WTC11 (cell line): ENCODE measurements at regions of chr6 and their contacts with region 1.

Region 1: GRCh38 chr6:159463119-159463829 is 229.8 kb downstream of the SOD2 start:
- DNase-seq: no peak
- ATAC-seq: 0 out of 2 replicates have a peak, but pooled peaks have one; percentile 22
- H3K4me3 Mint-ChIP-seq: no peak overlapping the region
- H3K27ac Mint-ChIP-seq: no peak overlapping the region
- H3K4me1 Mint-ChIP-seq: peaks cover 10% of the 10 kb centered on the region
- H3K27me3 Mint-ChIP-seq: no peaks in the 10 kb centered on the region
- CTCF ChIP-seq: peak; percentile 41; the same call in 1 of the 2 replicates

Region 2: GRCh38 chr6:159169193-159169555 is 294.1 kb before region 1 on chr6 and contains the start of gene FNDC1:
- CTCF ChIA-PET with region 1: interaction called, 33 read pairs
- POLR2A ChIA-PET with region 1: no interaction called
- DNase-seq: peak; percentile 63
- ATAC-seq: peak; percentile 47
- H3K4me3 Mint-ChIP-seq: peak within 1 kb of the TSS; percentile 77
- H3K27ac Mint-ChIP-seq: no peak within 1 kb of the TSS
- H3K4me1 Mint-ChIP-seq: peaks cover 15% of the 10 kb centered on the region
- H3K27me3 Mint-ChIP-seq: peaks cover 90% of the 10 kb centered on the region
- CTCF ChIP-seq: peak; percentile 27; the same call in 1 of the 2 replicates
- total RNA-seq, gene FNDC1: 0.23 to 0.44 TPM (median 0.34 TPM) in 3 replicates

Region 3: DNA sequence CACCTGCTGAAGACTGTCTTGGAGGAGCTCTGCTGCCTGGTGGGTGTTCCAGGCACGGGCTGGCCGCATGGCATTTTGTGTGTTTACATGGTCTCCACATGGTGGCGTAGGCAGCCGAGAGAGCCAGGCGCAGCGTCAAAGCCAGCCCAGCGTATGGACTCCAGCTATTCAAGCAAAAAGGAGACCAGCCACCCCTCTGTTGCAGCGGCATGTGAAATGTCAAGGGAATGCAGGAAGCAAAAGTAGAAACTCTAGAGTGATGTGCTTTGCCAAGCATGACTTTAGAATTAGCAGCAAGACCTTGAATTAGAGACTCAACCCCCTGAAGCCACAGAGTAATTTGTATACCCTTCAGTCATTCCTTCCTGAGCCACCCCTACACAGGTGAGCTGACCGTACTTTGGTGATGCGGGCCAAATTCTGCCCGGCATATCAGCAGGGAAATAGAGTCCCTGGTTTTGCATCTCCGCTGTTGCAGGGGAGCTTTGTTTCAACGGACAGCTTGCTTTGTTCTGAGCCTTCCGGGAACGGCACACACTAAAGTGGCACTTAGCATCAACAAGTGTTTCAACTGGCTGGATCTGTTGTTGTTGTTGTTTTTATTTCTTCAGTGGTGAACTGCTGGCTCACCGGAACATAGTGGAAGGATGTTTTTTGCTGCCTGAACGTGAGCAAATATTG is 245.5 kb before region 1 on chr6:
- CTCF ChIA-PET with region 1: interaction called, 31 read pairs
- POLR2A ChIA-PET with region 1: no interaction called
- DNase-seq: peak; percentile 80
- ATAC-seq: peak; percentile 94
- H3K4me3 Mint-ChIP-seq: no peak overlapping the region
- H3K27ac Mint-ChIP-seq: peak overlapping the region; percentile 21; the same call in 1 of the 2 replicates
- H3K4me1 Mint-ChIP-seq: peaks cover 23% of the 10 kb centered on the region
- H3K27me3 Mint-ChIP-seq: no peaks in the 10 kb centered on the region
- CTCF ChIP-seq: 0 out of 2 replicates have a peak, but pooled peaks have one; percentile 14

Region 4: DNA sequence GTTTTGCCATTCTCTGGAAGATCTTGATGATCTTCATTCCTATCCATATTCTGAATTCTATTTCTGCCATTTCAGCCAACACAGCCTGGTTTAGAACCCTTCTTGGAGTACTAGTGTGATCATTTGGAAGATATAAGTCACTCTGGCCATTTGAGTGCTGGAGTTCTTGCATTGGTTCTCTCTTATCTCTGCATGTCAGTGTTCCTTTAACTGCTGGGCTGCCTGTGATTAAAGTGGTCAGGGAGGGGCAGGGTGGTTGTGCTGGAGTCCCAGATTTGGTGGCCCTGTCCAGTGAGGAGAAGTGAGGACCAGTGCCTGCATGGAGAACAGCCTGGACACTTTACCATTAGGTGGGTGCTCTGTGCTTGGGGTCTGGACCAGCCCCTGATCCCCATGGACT is 56.7 kb after region 1 on chr6:
- CTCF ChIA-PET with region 1: no interaction called
- POLR2A ChIA-PET with region 1: no interaction called
- DNase-seq: no peak
- ATAC-seq: no peak
- H3K4me3 Mint-ChIP-seq: no peak overlapping the region
- H3K27ac Mint-ChIP-seq: no peak overlapping the region
- H3K4me1 Mint-ChIP-seq: no peaks in the 10 kb centered on the region
- H3K27me3 Mint-ChIP-seq: peaks cover 14% of the 10 kb centered on the region; the same call in 1 of the 2 replicates
- CTCF ChIP-seq: no peak